Ovary (tissue), 10 donors: ENCODE measurements at regions of chr2 and their contacts with region 1.

Region 1: GRCh38 chr2:204197336-204198005 is 260.9 kb downstream of the ICOS start:
- DNase-seq: no peak
- H3K4me3 ChIP-seq: no peak overlapping the region
- H3K27ac ChIP-seq: no peak overlapping the region
- H3K4me1 ChIP-seq: no peaks in the 10 kb centered on the region
- H3K27me3 ChIP-seq: no peaks in the 10 kb centered on the region
- CTCF ChIP-seq: no peak
- EP300 ChIP-seq: no peak
- POLR2A ChIP-seq: no peak

Region 2: GRCh38 chr2:205047273-205047863 is 849.9 kb after region 1 on chr2:
- intact Hi-C with region 1: loop called in 1 of 4 experiments (anchors 5 kb)
- DNase-seq: no peak
- H3K4me3 ChIP-seq: no peak overlapping the region
- H3K27ac ChIP-seq: no peak overlapping the region
- H3K4me1 ChIP-seq: no peaks in the 10 kb centered on the region
- H3K27me3 ChIP-seq: no peaks in the 10 kb centered on the region
- CTCF ChIP-seq: no peak
- EP300 ChIP-seq: no peak
- POLR2A ChIP-seq: no peak